ENCODE measurements at regions of chrX and their contacts with region 1.

Region 1: DNA sequence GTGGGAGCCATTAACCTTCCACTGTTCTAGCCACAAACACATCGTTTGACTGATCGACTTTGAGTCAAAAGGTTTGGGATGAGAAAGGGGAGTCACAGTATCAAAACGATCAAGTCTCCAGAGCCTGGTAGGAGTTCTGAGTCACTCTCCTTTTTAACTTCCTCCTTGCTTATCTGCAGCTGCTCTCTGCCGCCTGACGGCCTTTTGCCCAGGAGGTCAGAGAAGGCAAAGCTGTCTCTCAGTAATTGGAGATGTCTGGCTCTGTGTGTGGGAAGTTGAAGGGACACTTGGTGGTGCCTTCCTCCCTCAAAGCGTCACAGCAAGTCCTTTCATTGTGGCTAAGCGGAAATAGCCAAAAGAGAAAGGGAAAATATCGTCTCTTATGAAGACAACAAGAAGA is 63.1 kb downstream of the ANOS1 start:
- DNase-seq: peak; percentile 50 to 82
- H3K4me3 ChIP-seq: peak overlapping the region; percentile 8; the same call in 1 of the 2 replicates
- H3K27ac ChIP-seq: peak overlapping the region; percentile 45
- H3K4me1 ChIP-seq: peaks cover 8% of the 10 kb centered on the region
- H3K27me3 ChIP-seq: no peaks in the 10 kb centered on the region
- CTCF ChIP-seq: no peak

Region 2: GRCh38 chrX:8607326-8607725 is 61.5 kb before region 1 on chrX:
- CTCF ChIA-PET with region 1: no interaction called
- POLR2A ChIA-PET with region 1: no interaction called
- intact Hi-C with region 1: loop called (anchors 10 kb)
- DNase-seq: peak in 1 of 2 experiments; percentile 86
- H3K4me3 ChIP-seq: no peak overlapping the region
- H3K27ac ChIP-seq: peak overlapping the region; percentile 45
- H3K4me1 ChIP-seq: peaks cover 14% of the 10 kb centered on the region
- H3K27me3 ChIP-seq: no peaks in the 10 kb centered on the region
- CTCF ChIP-seq: no peak

Region 3: DNA sequence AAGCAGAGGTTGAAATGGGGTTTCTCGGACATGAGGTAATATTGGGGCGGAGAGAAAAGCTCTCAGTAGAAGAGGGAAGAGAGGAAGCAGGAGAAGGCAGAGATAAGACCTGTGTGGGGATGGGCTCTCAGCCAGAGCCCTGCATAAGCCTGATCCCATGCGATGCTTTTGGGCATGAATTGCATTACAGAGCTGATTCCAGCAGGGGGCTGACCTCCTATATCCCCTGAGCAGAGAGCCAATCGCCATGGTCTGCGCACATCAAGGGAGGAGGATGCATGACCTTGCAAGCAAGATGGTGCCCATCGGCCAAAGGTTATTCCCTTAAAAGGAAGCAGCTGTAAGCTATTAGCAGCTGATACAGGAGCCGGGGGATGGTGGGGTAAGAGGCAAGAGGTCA is 55.5 kb after region 1 on chrX:
- CTCF ChIA-PET with region 1: no interaction called
- POLR2A ChIA-PET with region 1: no interaction called
- intact Hi-C with region 1: loop called (anchors 10 kb)
- DNase-seq: no peak
- H3K4me3 ChIP-seq: no peak overlapping the region
- H3K27ac ChIP-seq: no peak overlapping the region
- H3K4me1 ChIP-seq: peaks cover 20% of the 10 kb centered on the region
- H3K27me3 ChIP-seq: no peaks in the 10 kb centered on the region
- CTCF ChIP-seq: no peak

Region 4: GRCh38 chrX:9291629-9292028 is 622.8 kb after region 1 on chrX:
- CTCF ChIA-PET with region 1: no interaction called
- POLR2A ChIA-PET with region 1: no interaction called
- intact Hi-C with region 1: no loop called
- DNase-seq: no peak
- H3K4me3 ChIP-seq: no peak overlapping the region
- H3K27ac ChIP-seq: no peak overlapping the region
- H3K4me1 ChIP-seq: no peaks in the 10 kb centered on the region
- H3K27me3 ChIP-seq: peaks cover 12% of the 10 kb centered on the region; the same call in 1 of the 2 replicates
- CTCF ChIP-seq: no peak